WTC11 (cell line): ENCODE measurements at regions of chr10 and their contacts with region 1.

Region 1: DNA sequence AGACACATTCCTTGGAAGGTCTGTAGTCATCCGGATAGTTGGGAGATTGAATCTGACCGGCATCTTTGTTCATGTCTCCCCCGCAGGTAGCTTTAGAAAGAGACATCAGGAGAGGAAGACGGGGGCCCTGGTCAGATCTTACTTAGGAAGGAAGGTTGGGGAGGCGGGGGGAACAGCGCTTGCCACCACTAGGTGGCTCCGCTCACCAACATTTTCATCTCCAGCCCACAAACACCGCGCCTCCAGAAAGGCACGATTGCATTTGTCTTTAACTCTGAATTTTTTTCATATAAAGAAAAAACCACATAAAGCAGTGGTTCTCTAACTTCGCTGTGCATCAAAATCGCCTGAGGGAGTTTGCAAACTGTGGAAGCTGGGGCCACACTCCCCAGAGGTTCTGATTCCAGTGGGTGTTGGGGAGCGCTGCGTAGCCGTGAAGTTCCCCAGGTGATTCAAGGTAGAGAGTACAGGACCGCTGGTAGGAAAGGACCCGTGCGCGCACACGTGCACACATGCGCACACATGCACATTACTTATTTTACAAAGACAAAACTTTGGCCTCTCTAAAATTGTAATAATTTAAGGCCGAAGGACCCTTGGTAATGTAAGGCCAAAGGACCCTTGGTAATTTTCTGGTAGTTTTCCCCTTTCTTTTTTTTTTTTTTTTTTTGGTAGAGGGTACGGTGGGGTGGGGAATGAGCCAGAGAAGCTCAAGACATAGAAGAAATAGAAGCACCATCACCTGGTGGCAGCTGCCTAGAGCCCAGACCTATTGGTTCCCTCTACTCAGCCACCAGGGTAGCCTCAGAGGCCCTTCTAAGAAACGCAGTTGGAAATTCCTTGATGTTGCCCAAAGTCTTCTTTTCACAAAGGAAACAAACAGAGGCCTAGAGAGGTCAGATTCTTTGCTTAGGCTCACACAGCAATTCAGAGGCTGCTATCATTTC is 37.4 kb upstream of the OPALIN start:
- DNase-seq: peak; percentile 77
- ATAC-seq: peak; percentile 87
- H3K4me3 Mint-ChIP-seq: peak overlapping the region; percentile 62
- H3K27ac Mint-ChIP-seq: no peak overlapping the region
- H3K4me1 Mint-ChIP-seq: peaks cover 24% of the 10 kb centered on the region
- H3K27me3 Mint-ChIP-seq: no peaks in the 10 kb centered on the region
- CTCF ChIP-seq: peak; percentile 82

Region 2: GRCh38 chr10:96416643-96417042 is 20.4 kb after region 1 on chr10:
- CTCF ChIA-PET with region 1: interaction called, 10 read pairs
- POLR2A ChIA-PET with region 1: no interaction called
- DNase-seq: no peak
- ATAC-seq: no peak
- H3K4me3 Mint-ChIP-seq: no peak overlapping the region
- H3K27ac Mint-ChIP-seq: no peak overlapping the region
- H3K4me1 Mint-ChIP-seq: peaks cover 8% of the 10 kb centered on the region; the same call in 1 of the 2 replicates
- H3K27me3 Mint-ChIP-seq: no peaks in the 10 kb centered on the region
- CTCF ChIP-seq: no peak

Region 3: GRCh38 chr10:96470116-96470743 is 74.0 kb after region 1 on chr10:
- CTCF ChIA-PET with region 1: interaction called, 20 read pairs
- POLR2A ChIA-PET with region 1: no interaction called
- DNase-seq: peak; percentile 73
- ATAC-seq: peak; percentile 95
- H3K4me3 Mint-ChIP-seq: no peak overlapping the region
- H3K27ac Mint-ChIP-seq: no peak overlapping the region
- H3K4me1 Mint-ChIP-seq: peaks cover 27% of the 10 kb centered on the region
- H3K27me3 Mint-ChIP-seq: no peaks in the 10 kb centered on the region
- CTCF ChIP-seq: peak; percentile 46

Region 4: GRCh38 chr10:96496281-96496925 is 100.2 kb after region 1 on chr10:
- CTCF ChIA-PET with region 1: interaction called, 16 read pairs
- POLR2A ChIA-PET with region 1: no interaction called
- DNase-seq: peak; percentile 30
- ATAC-seq: peak; percentile 80
- H3K4me3 Mint-ChIP-seq: no peak overlapping the region
- H3K27ac Mint-ChIP-seq: no peak overlapping the region
- H3K4me1 Mint-ChIP-seq: peaks cover 36% of the 10 kb centered on the region
- H3K27me3 Mint-ChIP-seq: no peaks in the 10 kb centered on the region; the same call in 1 of the 2 replicates
- CTCF ChIP-seq: no peak